ENCODE measurements at regions of chr17 and their contacts with region 1.

Region 1: GRCh38 chr17:28973425-28973824 is 22.1 kb upstream of the PHF12 start:
- DNase-seq: no peak
- ATAC-seq: peak; percentile 40; the same call in 2 of the 3 replicates
- H3K4me3 ChIP-seq: no peak overlapping the region
- H3K27ac ChIP-seq: no peak overlapping the region
- H3K4me1 ChIP-seq: peaks cover 0 to 6% of the 10 kb centered on the region in 2 experiments; a peak in 3 of 5 replicates
- H3K27me3 ChIP-seq: peaks cover 30 to 69% of the 10 kb centered on the region in 2 experiments; a peak in 4 of 5 replicates
- CTCF ChIP-seq: no peak
- EP300 ChIP-seq: no peak
- POLR2A ChIP-seq: no peak
- RAD21 ChIP-seq: no peak

Region 2: DNA sequence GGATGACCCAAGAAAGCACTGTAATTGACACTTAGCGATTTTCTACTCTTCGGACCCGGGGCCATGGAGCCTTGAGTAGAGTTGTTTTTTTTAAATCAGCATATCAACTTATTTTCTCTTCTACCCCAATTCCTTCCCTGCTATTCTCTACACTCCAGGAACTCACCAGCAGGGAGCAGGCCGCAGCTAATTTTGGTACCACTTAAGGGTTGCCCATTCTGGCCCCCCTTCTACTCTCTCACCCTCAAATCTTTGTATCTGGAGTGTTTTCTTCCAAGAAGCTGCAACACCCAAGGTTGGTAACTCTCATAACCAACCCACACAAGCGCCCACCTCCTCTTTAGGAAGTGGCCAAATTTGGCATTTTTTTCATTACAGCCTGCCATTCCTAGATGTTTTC is 124.1 kb before region 1 on chr17:
- CTCF ChIA-PET with region 1: no interaction called
- POLR2A ChIA-PET with region 1: no interaction called
- in situ Hi-C with region 1: no loop called
- intact Hi-C with region 1: no loop called
- DNase-seq: peak in 3 of 4 experiments; percentile 52 to 58 (median 55)
- ATAC-seq: peak; percentile 87
- H3K4me3 ChIP-seq: no peak overlapping the region
- H3K27ac ChIP-seq: no peak overlapping the region
- H3K4me1 ChIP-seq: peaks cover 3 to 14% of the 10 kb centered on the region in 2 experiments; a peak in 2 of 5 replicates
- H3K27me3 ChIP-seq: no peaks in the 10 kb centered on the region
- CTCF ChIP-seq: peak; percentile 50 to 81 (median 59)
- EP300 ChIP-seq: no peak
- POLR2A ChIP-seq: no peak
- RAD21 ChIP-seq: peak; percentile 40 to 77; a peak in 3 of 4 replicates

Region 3: GRCh38 chr17:28940675-28941074 is 32.8 kb before region 1 on chr17:
- CTCF ChIA-PET with region 1: no interaction called
- POLR2A ChIA-PET with region 1: no interaction called
- in situ Hi-C with region 1: no loop called
- intact Hi-C with region 1: no loop called
- DNase-seq: no peak
- ATAC-seq: no peak
- H3K4me3 ChIP-seq: no peak overlapping the region
- H3K27ac ChIP-seq: no peak overlapping the region
- H3K4me1 ChIP-seq: peaks cover 0 to 14% of the 10 kb centered on the region in 2 experiments; a peak in 3 of 5 replicates
- H3K27me3 ChIP-seq: no peaks in the 10 kb centered on the region
- CTCF ChIP-seq: no peak
- EP300 ChIP-seq: no peak
- POLR2A ChIP-seq: no peak
- RAD21 ChIP-seq: no peak

Region 4: DNA sequence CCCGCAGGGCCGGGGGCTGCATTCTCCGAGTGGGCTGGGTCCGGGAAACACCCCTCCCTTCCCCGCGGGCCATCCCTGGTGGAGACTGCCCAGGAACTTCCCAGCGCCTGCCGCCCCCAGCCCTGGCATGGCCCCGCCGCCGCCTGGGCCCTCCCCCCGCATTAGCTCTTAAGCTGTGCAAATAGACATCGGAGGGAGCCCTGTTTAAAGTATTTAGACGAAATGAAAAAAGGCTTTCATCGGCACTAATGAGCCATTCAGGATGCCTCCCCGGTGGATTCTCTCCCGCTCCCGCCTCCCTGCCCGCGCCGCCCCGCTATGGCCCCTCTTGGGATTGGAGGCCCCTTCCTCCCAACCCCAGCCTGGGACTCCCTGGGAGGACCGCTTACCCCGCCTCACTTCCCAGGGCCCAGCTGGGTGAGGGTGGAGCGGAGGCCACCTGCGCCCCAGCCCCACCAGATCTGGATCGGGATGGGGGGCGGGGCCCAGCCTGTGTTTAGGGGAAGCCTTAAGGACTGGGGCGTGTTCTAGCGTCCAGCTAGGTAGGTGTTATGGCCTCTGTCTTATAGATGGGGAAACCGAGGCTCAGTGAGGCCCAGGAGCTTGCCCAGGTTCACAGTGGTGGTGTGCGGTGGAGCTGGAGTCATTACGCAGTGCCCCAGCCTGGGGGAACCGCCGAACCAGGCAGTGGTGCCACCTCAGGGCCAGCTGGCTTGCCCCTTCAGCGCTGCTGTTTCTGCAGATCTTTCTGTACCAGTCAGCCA is 12.7 kb after region 1 on chr17:
- CTCF ChIA-PET with region 1: no interaction called
- POLR2A ChIA-PET with region 1: interaction called, 15 read pairs
- in situ Hi-C with region 1: no loop called
- intact Hi-C with region 1: no loop called
- DNase-seq: peak in 2 of 4 experiments; percentile 46 to 50
- ATAC-seq: no peak
- H3K4me3 ChIP-seq: no peak overlapping the region
- H3K27ac ChIP-seq: no peak overlapping the region
- H3K4me1 ChIP-seq: peaks cover 0 to 9% of the 10 kb centered on the region in 2 experiments; a peak in 2 of 5 replicates
- H3K27me3 ChIP-seq: peaks cover 7 to 67% of the 10 kb centered on the region in 2 experiments; a peak in 3 of 5 replicates
- CTCF ChIP-seq: no peak
- EP300 ChIP-seq: no peak
- POLR2A ChIP-seq: no peak
- RAD21 ChIP-seq: no peak